MCF 10A (cell line): ENCODE measurements at regions of chr10 and their contacts with region 1.

Region 1: GRCh38 chr10:69337296-69338132 is 59.2 kb downstream of the HK1 start:
- DNase-seq: peak; percentile 96
- H3K4me3 Mint-ChIP-seq: peak overlapping the region; percentile 60
- H3K27ac Mint-ChIP-seq: peak overlapping the region; percentile 78
- H3K4me1 Mint-ChIP-seq: peaks cover 70% of the 10 kb centered on the region
- H3K27me3 Mint-ChIP-seq: no peaks in the 10 kb centered on the region
- CTCF ChIP-seq: no peak

Region 2: DNA sequence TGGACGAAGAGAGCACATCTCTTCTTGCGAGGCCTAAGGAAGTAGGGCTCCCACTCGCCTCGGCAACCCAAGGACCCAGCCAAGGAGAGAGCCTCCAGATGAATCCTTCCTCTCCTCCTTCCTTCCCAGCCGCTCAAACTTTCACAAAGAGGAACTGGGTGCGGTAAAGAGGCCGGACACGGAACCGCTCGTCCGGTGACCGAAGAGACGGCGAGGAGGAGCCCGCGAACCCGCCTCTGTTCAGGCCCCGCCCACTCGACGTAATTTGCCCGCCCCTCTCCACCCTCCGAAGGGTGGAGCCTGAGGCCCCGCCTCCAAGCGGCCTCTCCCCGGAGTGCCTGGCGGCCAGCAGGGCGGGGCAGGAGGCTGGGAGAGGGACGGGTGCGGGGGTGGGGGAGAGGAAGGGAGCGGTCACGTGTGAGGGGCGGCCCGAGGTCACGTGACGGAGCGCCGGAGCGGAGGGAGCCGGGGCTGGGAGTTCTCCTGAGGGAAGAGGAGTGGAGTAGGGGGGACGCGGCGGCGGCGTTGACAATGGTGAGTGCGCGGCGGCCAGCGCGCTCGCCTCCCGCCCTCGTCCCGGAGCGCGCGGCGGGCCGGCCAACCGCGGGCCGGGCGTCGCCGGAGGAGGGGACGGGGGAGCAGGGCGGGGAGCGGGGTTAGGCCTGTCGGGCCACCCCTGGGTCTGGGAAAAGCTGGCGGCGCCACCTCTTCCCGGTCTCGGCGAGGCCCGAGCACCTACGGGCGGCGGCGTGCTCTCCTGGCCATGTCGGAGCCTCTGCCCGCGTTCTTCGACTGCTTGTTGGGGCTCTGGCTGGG is 213.6 kb before region 1 on chr10 and contains the start of gene VPS26A:
- CTCF ChIA-PET with region 1: no interaction called
- POLR2A ChIA-PET with region 1: no interaction called
- intact Hi-C with region 1: loop called (anchors 10 kb)
- DNase-seq: peak; percentile 98
- H3K4me3 Mint-ChIP-seq: peak within 1 kb of the TSS; percentile 94
- H3K27ac Mint-ChIP-seq: peak within 1 kb of the TSS; percentile 94
- H3K4me1 Mint-ChIP-seq: peaks cover 6% of the 10 kb centered on the region
- H3K27me3 Mint-ChIP-seq: no peaks in the 10 kb centered on the region
- CTCF ChIP-seq: peak; percentile 21
- total RNA-seq, gene VPS26A: 63.7 and 80.9 TPM in 2 replicates

Region 3: DNA sequence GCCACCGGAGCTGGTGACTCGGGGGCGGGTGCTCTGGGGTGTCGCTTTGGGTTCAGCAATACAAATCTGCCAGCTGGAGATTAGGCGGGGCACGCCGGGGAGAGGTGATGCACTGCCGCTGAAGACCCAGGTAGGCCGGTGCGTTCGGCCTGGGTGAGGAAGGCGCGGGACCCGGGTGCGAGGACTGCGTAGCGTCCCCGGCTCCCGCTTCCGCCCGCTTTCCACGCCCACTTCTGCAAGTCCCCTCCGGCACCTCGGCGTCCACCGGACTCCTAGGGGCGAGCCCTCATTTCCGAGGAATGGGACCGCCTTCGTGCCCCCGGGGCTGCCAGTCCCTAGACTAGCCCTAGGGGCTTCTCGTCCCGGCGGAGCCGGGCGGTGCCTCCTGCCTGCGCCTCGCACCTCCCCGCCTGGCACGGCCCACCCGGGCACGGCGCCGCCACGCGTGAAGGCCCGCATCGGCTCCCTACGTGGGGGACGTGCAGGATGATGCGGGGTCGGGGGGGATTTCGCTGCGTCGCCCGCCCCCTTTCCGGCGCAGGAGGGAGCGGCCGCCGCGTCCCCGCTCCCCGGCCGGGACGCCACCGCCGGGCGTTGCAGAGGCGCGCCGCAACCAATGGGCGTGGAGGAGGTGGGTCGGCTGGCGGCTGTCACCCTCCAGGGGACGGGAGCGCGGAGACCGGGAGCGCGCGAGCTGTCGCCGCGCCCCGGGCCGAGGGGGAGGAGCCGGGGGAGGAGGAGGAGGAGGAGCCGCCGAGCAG is 19.2 kb before region 1 on chr10:
- CTCF ChIA-PET with region 1: interaction called, 7 read pairs
- POLR2A ChIA-PET with region 1: interaction called, 282 read pairs
- intact Hi-C with region 1: no loop called
- DNase-seq: peak; percentile 88
- H3K4me3 Mint-ChIP-seq: peak overlapping the region; percentile 93
- H3K27ac Mint-ChIP-seq: peak overlapping the region; percentile 51
- H3K4me1 Mint-ChIP-seq: peaks cover 26% of the 10 kb centered on the region
- H3K27me3 Mint-ChIP-seq: no peaks in the 10 kb centered on the region
- CTCF ChIP-seq: no peak

Region 4: DNA sequence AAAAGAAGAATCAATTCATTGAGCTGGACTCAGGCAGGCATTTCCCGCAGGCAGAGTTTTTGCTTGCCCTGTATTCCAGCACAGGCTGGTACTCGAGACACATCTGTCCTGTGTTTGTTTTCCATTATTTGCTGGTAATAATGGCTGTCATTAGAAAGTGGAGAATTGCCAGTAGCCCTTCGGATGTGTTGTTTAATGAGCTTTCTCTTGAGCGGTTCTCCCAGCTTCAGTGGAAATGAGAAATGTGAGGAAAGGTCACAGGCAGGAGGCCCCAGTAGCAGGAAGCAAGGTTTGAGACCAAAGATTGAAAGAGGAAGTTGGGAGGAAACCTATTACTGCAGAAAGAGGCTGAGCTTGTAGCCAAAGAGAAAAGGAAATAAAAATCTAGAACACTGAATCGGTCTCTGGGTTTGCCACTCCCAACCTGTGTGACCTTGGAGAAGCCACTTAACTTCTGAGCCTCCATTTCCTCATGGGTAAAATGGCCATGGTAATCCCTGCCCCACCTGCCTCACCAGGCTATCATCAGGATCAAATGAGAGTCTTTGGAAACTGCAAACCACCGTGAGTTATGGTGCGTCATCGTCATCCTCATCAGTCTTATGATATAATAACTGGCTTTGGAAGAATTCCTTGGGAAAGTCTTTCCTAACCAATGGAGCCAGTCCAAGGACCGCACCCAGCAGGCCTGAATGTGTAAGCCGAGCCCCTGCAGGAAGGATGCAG is 11.5 kb after region 1 on chr10:
- CTCF ChIA-PET with region 1: interaction called, 4 read pairs
- POLR2A ChIA-PET with region 1: interaction called, 23 read pairs
- intact Hi-C with region 1: no loop called
- DNase-seq: peak; percentile 96
- H3K4me3 Mint-ChIP-seq: no peak overlapping the region
- H3K27ac Mint-ChIP-seq: peak overlapping the region; percentile 93
- H3K4me1 Mint-ChIP-seq: peaks cover 25% of the 10 kb centered on the region
- H3K27me3 Mint-ChIP-seq: no peaks in the 10 kb centered on the region
- CTCF ChIP-seq: no peak

Region 5: DNA sequence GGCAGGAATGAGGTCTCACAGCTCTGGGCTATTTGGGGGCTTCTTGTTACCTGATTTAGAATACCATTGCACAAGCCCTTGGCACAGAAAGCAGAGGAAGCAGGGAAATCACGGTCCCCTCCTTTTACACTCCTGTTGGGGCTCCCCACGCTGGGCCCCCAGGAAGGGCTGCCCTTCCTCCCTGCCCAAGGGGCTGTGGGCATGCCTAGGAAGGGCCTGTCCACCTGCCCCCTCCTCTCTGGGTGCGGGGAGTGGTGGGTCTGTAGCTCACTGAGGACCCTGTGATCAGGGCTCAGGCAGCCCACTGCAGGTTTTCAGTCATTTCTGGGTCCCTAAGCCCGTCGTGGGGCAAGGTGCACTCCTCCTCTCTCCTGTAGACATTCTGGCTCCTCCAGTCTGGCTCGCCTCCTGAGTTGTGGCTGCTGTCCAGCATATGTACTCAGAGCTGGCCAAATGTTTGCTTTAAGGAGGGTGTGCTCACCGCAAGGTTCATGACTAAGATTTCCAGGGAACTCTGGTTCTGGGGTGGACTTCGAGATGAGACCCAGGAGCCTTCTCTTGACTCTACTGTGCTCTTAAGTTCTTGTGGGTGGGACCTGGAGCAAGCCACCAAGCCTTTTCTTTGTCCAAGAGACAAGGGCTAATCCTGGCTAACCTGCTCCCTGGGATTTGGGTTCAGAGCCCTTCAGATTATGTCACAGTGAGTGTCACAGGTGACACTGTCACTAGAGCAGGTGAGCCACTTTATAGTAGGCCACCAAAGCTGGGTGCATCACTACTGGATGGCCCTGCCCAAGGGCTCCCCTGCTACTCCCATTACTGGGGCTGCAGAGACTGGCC is 23.2 kb after region 1 on chr10:
- CTCF ChIA-PET with region 1: interaction called, 5 read pairs
- POLR2A ChIA-PET with region 1: interaction called, 37 read pairs
- intact Hi-C with region 1: no loop called
- DNase-seq: peak; percentile 96
- H3K4me3 Mint-ChIP-seq: peak overlapping the region; percentile 49
- H3K27ac Mint-ChIP-seq: peak overlapping the region; percentile 87
- H3K4me1 Mint-ChIP-seq: peaks cover 52% of the 10 kb centered on the region
- H3K27me3 Mint-ChIP-seq: no peaks in the 10 kb centered on the region
- CTCF ChIP-seq: no peak

Region 6: GRCh38 chr10:69392481-69393000 is 55.0 kb after region 1 on chr10:
- CTCF ChIA-PET with region 1: interaction called, 5 read pairs
- POLR2A ChIA-PET with region 1: interaction called, 11 read pairs
- intact Hi-C with region 1: no loop called
- DNase-seq: peak; percentile 90
- H3K4me3 Mint-ChIP-seq: no peak overlapping the region
- H3K27ac Mint-ChIP-seq: peak overlapping the region; percentile 51
- H3K4me1 Mint-ChIP-seq: peaks cover 19% of the 10 kb centered on the region
- H3K27me3 Mint-ChIP-seq: no peaks in the 10 kb centered on the region
- CTCF ChIP-seq: peak; percentile 96

Region 7: DNA sequence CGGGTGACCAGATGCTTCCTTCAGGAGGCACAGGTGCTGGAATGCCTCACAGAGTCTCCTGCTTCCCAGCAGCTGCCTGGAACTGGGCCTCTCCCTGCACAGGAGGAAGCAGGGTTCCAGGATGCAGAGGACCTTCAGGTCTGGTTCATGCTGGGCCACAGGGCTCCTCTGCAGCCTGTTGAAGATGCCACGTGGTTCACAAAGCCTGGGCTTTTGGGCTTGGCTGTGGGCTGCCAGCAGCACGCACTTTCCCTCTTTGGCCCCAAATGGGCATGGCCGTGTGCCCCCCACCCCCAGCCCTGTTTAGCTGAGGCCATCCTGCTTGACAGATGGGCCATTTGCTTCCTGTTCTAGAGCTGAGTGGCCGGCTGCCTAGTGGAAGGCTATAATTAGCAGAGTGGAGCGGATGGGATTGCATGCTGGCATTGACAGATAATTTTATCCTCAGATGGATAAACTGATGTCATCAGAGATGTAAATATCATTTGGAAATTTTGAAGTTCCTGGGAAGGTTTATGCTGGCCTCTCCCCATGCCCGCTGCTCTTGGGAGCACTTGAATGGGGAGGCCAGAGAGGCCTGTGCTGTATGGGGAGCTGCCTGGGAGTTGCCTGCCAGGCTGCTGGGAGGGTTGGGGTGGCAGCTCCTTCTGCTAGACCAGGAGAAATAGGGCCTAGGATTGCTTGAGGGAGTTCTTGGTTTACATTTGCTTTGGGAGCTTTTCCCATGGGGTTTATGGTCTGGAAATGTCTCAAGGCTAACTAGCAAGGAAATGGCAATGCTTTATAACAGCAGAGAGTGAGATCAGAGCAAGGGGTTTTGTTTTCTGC is 141.9 kb after region 1 on chr10:
- CTCF ChIA-PET with region 1: no interaction called
- POLR2A ChIA-PET with region 1: no interaction called
- intact Hi-C with region 1: no loop called
- DNase-seq: no peak
- H3K4me3 Mint-ChIP-seq: no peak overlapping the region
- H3K27ac Mint-ChIP-seq: no peak overlapping the region
- H3K4me1 Mint-ChIP-seq: peaks cover 11% of the 10 kb centered on the region
- H3K27me3 Mint-ChIP-seq: no peaks in the 10 kb centered on the region
- CTCF ChIP-seq: no peak